Activated CD4-positive, alpha-beta memory T cell treated with anti-CD3 and anti-CD28 coated beads for 36 hours (primary cell): ENCODE measurements at regions of chr7 and their contacts with region 1.

Region 1: DNA sequence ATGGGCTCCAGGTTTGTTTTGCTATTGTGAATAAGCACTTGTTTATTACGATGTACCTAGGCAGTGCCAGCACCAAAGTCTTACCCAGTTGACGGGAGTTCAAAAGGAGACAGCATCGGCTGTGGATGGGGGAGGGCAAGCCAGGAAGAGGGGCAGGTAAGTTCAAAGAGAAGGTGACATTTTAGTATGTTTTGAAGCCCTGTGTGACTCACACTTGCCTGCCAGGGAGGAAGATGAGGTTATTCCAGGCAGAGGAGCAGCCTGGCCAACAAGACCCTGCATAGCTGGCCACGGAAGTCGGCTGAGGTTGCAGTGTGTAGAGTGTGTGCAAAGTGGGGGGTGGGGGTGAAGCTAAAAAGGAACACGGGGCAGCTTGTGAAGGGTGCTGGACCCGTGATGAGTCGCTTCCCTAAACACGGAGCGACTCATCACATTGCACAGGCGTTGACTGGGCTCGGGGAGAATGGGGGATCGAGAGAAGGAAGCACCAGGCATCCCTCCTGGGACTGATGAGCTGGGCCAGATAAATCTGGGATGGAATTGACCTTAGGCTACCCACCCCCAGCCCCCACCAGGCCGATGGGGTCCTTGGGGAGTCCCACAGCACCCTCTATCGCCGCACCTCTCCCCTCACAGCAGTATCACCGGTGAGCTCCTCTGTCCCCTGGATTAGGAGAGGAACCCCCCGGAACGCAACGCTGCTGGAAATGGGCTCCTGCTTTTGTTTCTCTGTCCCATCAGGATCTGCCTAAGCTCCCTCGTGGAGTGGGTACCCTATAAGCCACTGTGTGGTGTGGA is 97.9 kb upstream of the IKZF1 start:
- DNase-seq: peak; percentile 86
- H3K4me3 Mint-ChIP-seq: peak overlapping the region; percentile 50
- H3K27ac Mint-ChIP-seq: peak overlapping the region; percentile 86
- H3K4me1 Mint-ChIP-seq: peaks cover 84% of the 10 kb centered on the region
- H3K27me3 Mint-ChIP-seq: no peaks in the 10 kb centered on the region

Region 2: DNA sequence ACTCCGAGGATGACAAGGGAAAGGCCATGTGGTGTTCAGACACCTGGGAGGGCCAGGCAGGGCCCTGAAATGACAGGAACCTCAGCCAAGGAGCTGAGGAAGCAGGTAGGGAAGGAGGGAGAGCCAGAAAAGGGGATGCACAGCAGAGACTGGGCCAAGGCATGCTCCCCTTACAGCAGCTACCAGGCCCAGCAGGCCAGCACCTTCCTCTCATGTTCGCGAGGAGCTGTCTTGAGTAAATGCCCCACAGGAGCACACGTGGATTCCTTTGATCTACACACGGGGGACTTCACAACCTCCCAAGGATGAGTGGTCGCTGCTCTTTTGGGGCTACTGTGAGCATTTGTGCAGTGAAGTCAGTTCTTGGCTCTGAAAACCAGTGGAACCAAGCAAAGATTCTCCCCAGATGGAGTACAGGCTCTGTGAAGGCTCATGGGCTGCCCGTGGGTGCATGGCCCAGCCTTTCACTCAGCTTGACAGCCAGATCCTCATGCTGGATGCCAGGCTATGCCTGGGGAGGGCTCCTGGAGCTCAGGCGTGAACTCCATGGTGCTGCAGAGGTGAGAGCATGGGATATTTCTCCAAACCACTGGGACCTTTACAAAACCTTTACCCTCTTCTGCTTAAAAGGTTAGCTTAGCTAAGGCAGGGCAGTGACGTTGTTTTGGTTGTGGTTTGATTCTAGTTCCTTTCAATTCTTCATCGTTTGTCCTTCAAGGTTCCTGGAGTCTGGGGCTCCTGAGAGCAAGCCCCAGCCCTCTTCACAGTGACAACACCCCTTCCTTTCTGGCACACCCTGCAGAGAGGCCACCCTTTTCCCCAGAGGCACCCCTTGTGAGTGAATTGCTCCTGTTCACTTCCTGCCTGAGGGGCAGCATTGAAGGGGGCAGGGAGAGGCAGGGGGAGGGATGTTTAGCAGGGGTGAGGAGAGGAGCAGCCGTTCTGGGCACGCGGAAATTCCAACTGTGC is 39.4 kb before region 1 on chr7:
- CTCF ChIA-PET with region 1: no interaction called
- POLR2A ChIA-PET with region 1: no interaction called
- intact Hi-C with region 1: no loop called
- DNase-seq: peak; percentile 30
- H3K4me3 Mint-ChIP-seq: no peak overlapping the region
- H3K27ac Mint-ChIP-seq: peak overlapping the region; percentile 59
- H3K4me1 Mint-ChIP-seq: peaks cover 54% of the 10 kb centered on the region
- H3K27me3 Mint-ChIP-seq: no peaks in the 10 kb centered on the region

Region 3: GRCh38 chr7:50190776-50191175 is 15.9 kb before region 1 on chr7:
- CTCF ChIA-PET with region 1: interaction called, 11 read pairs
- POLR2A ChIA-PET with region 1: no interaction called
- intact Hi-C with region 1: no loop called
- DNase-seq: no peak
- H3K4me3 Mint-ChIP-seq: no peak overlapping the region
- H3K27ac Mint-ChIP-seq: no peak overlapping the region
- H3K4me1 Mint-ChIP-seq: peaks cover 9% of the 10 kb centered on the region
- H3K27me3 Mint-ChIP-seq: peaks cover 2% of the 10 kb centered on the region

Region 4: GRCh38 chr7:50304158-50304910 is 97.7 kb after region 1 on chr7 and contains the start of gene IKZF1:
- CTCF ChIA-PET with region 1: interaction called, 159 read pairs
- POLR2A ChIA-PET with region 1: interaction called, 34 read pairs
- intact Hi-C with region 1: loop called (anchors 1 kb)
- DNase-seq: peak; percentile 76
- H3K4me3 Mint-ChIP-seq: peak within 1 kb of the TSS; percentile 86
- H3K27ac Mint-ChIP-seq: peak within 1 kb of the TSS; percentile 94
- H3K4me1 Mint-ChIP-seq: peaks cover 42% of the 10 kb centered on the region
- H3K27me3 Mint-ChIP-seq: no peaks in the 10 kb centered on the region
- total RNA-seq, gene IKZF1: 207 to 216 TPM

Region 5: DNA sequence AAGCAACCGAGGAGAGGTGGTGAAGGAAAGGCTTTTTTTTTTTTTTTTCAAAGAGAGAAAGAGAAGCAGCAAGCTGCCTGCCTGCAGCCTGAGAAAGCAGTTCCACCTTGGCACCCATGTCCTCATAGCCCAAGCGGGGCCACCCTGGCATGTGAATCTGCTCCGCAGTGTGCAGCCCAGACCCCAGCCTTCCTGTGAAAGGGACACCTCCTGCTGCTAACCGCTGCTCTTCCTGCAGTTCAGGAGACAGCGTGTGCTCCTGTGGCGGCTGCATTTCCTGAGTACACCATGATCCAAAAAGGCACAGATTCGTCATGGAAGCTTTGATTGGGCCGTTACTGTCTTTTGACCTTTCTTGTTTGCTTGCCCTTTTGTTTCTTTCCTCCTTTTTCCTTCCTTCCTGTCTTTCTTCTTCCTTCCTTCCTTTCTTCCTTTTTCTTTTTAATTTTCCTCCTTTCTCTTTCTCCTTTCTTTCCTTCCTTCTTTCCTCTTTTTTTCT is 136.0 kb after region 1 on chr7:
- CTCF ChIA-PET with region 1: interaction called, 32 read pairs
- POLR2A ChIA-PET with region 1: interaction called, 19 read pairs
- intact Hi-C with region 1: no loop called
- DNase-seq: peak; percentile 72
- H3K4me3 Mint-ChIP-seq: peak overlapping the region; percentile 67
- H3K27ac Mint-ChIP-seq: no peak overlapping the region
- H3K4me1 Mint-ChIP-seq: peaks cover 65% of the 10 kb centered on the region
- H3K27me3 Mint-ChIP-seq: no peaks in the 10 kb centered on the region

Region 6: DNA sequence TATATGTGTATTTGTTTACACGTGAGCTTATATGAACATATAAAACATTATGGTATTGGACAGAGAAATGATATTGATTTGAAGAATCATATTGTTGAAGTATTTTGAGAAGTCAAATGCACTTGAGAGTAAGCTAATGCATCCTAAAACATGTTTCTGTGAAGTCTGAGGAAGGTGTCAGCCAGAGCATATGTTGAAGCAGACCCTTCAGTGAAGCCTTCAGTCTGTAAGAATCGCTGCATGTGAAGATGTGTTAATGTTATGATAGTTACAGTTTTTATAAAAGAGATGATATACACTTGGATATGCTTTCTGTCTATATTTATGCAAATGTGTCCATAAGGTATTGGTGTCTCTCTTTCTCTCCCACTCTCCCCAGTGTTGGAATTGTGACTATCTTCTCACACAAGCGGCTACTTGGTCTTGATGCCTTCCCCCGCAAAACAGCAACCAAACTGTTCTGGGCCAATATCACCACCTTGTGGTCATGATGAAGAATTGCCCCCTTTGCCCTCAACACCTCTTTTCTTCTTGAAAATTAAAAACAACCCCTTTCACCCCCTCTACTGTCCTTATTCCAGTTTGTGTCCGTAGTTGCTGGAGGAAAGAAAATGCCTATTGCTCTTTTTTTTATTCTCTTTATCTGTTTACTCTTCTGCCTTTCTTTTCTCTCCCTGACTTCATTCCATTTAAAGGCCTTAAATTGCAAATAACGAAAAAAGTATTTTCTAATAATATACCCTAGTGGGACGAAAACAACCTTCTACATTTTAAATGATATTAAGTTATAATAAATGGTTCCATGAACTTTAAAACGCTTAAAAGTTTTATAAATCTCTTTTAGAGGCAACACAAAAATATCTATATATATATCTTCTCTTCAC is 162.7 kb after region 1 on chr7:
- CTCF ChIA-PET with region 1: interaction called, 159 read pairs
- POLR2A ChIA-PET with region 1: interaction called, 18 read pairs
- intact Hi-C with region 1: loop called (anchors 1 kb)
- DNase-seq: peak; percentile 56
- H3K4me3 Mint-ChIP-seq: no peak overlapping the region
- H3K27ac Mint-ChIP-seq: peak overlapping the region; percentile 93
- H3K4me1 Mint-ChIP-seq: peaks cover 97% of the 10 kb centered on the region
- H3K27me3 Mint-ChIP-seq: no peaks in the 10 kb centered on the region

Region 7: GRCh38 chr7:50449881-50450589 is 243.4 kb after region 1 on chr7 and contains the start of gene FIGNL1:
- CTCF ChIA-PET with region 1: interaction called, 16 read pairs
- POLR2A ChIA-PET with region 1: no interaction called
- intact Hi-C with region 1: no loop called
- DNase-seq: peak; percentile 90
- H3K4me3 Mint-ChIP-seq: peak within 1 kb of the TSS; percentile 92
- H3K27ac Mint-ChIP-seq: peak within 1 kb of the TSS; percentile 91
- H3K4me1 Mint-ChIP-seq: peaks cover 48% of the 10 kb centered on the region
- H3K27me3 Mint-ChIP-seq: no peaks in the 10 kb centered on the region
- total RNA-seq, gene FIGNL1: 46.2 to 49.0 TPM